Activated CD4-positive, alpha-beta T cell treated with anti-CD3 and anti-CD28 coated beads for 36 hours (primary cell): ENCODE measurements at regions of chr2 and their contacts with region 1.

Region 1: GRCh38 chr2:178530625-178531142 is 50.4 kb downstream of the PLEKHA3 start:
- DNase-seq: peak; percentile 75
- ATAC-seq: peak; percentile 93
- H3K4me3 Mint-ChIP-seq: peak overlapping the region; percentile 24
- H3K27ac Mint-ChIP-seq: peak overlapping the region; percentile 79
- H3K4me1 Mint-ChIP-seq: peaks cover 56% of the 10 kb centered on the region
- H3K27me3 Mint-ChIP-seq: no peaks in the 10 kb centered on the region

Region 2: DNA sequence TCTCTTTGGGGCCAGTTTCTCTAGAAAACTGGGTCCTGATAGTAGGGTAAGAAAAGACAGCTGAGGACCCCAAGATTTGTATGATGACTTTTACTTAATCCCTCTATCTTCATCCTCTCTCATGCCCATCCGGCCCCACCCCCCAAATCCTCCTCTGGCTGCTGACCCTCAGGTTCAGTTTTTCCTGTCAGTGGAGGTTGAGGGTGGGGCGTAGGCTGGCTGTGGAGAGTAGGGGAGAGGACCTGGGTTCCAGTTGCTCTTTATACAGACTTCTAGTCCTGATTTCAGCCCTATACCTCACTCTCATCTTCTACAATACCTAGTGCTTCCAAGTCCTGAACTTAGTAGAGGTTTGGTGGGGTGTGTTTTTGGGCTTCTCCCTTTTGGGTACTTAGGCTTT is 22.0 kb before region 1 on chr2:
- CTCF ChIA-PET with region 1: no interaction called
- POLR2A ChIA-PET with region 1: interaction called, 4 read pairs
- intact Hi-C with region 1: loop called in 1 of 2 experiments (anchors 2 kb)
- DNase-seq: no peak
- ATAC-seq: no peak
- H3K4me3 Mint-ChIP-seq: no peak overlapping the region
- H3K27ac Mint-ChIP-seq: no peak overlapping the region
- H3K4me1 Mint-ChIP-seq: peaks cover 26% of the 10 kb centered on the region
- H3K27me3 Mint-ChIP-seq: no peaks in the 10 kb centered on the region

Region 3: DNA sequence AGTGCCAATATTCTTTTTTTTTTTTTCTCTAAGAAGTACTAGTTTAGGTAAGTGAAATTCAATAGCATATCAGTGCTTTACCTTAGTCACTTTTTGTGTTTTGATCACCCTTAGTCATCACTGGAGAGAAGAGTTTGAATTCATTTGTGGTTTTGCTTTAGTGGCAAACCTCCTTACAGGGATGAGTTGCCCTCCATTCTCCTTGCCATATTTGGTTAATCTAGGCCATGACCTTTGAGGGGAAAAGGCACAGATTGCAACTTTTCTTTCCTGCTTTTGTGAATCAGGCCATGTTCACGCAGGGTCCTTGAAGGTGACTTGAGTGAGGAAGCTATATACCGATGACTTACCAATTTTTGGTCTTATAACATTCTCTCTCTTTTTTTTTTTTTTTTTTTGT is 16.0 kb before region 1 on chr2:
- CTCF ChIA-PET with region 1: interaction called, 11 read pairs
- POLR2A ChIA-PET with region 1: interaction called, 4 read pairs
- intact Hi-C with region 1: loop called (anchors 1 kb)
- DNase-seq: peak; percentile 70
- ATAC-seq: peak; percentile 95
- H3K4me3 Mint-ChIP-seq: peak overlapping the region; percentile 24
- H3K27ac Mint-ChIP-seq: peak overlapping the region; percentile 78
- H3K4me1 Mint-ChIP-seq: peaks cover 28% of the 10 kb centered on the region
- H3K27me3 Mint-ChIP-seq: no peaks in the 10 kb centered on the region